ENCODE measurements at regions of chr2 and their contacts with region 1.

Region 1: GRCh38 chr2:201231781-201232466 is 28.4 kb upstream of the CASP8 start:
- DNase-seq: peak; percentile 96
- H3K4me3 Mint-ChIP-seq: peak overlapping the region; percentile 94
- H3K27ac Mint-ChIP-seq: peak overlapping the region; percentile 63
- H3K4me1 Mint-ChIP-seq: peaks cover 30% of the 10 kb centered on the region
- H3K27me3 Mint-ChIP-seq: no peaks in the 10 kb centered on the region
- CTCF ChIP-seq: peak; percentile 89

Region 2: DNA sequence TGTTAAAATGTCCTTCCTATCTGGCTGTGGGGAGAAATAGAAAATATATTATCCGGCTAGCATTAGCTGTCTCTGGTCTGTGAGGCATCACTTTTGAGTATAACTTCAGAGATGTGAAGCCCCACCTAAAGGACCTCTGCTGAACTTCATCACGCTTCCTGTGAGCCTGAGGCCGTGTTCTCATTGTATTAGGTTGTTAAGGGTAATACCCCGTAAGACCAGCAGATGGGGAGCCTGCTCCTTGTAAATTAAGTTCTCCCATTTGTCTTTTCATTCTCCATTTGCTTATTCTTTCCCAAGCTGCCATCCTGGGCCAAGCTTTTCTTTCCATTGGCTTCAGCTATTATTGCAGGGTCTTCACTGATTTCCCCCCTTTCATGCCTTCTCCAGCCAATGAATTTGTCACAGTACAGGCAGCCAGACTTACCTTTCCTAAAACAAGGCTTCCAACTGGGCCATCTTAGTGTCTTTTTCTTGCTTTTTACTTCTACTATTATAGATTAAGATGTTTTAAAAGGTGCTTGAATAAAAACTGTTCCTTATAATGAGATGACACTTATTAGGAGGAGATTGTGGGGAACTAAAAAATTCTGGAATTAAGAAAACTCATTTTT is 330.4 kb before region 1 on chr2:
- CTCF ChIA-PET with region 1: interaction called, 15 read pairs
- POLR2A ChIA-PET with region 1: interaction called, 13 read pairs
- intact Hi-C with region 1: loop called (anchors 1 kb)
- DNase-seq: peak; percentile 90
- H3K4me3 Mint-ChIP-seq: no peak overlapping the region
- H3K27ac Mint-ChIP-seq: no peak overlapping the region
- H3K4me1 Mint-ChIP-seq: no peaks in the 10 kb centered on the region
- H3K27me3 Mint-ChIP-seq: no peaks in the 10 kb centered on the region
- CTCF ChIP-seq: peak; percentile 88

Region 3: DNA sequence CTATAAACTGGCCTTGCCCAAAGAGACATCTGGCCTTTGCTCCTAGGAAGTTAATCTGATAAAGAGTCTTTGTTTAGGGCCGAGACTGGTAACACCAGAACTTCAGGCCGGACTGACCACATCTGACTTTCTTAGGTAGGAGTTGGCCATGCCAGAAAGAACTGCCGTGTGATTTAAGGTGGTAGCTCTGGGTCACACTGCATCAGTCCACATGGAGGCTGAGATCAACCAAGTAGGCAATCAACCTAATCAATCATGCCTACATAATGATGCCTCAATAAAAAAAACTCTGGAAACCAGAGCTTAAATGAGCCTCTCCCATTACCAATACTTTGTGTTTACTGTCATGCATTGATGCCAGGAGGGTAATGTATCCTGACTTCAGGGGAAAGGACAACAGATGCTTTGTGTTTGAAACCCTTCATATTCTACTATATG is 224.3 kb before region 1 on chr2:
- CTCF ChIA-PET with region 1: no interaction called
- POLR2A ChIA-PET with region 1: no interaction called
- intact Hi-C with region 1: no loop called
- DNase-seq: no peak
- H3K4me3 Mint-ChIP-seq: no peak overlapping the region
- H3K27ac Mint-ChIP-seq: no peak overlapping the region
- H3K4me1 Mint-ChIP-seq: no peaks in the 10 kb centered on the region
- H3K27me3 Mint-ChIP-seq: no peaks in the 10 kb centered on the region
- CTCF ChIP-seq: no peak

Region 4: DNA sequence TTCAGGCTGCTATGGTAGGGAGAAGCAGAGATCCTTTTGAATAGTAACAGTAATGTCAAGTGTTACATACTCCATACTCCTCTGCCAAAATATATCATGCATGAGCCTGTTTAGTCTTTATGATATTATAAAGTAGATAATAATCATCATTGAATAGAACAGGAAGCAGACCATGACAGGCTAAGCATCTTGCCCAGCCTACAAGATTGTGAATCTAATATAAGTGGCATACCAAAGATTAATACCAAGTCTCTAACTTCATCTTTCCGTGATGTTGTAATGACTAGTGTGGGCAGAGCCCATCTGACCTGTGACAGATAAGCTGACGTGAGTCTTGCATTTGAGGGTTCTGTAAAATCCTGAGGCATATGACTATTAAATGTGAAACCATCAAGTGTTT is 147.1 kb before region 1 on chr2:
- CTCF ChIA-PET with region 1: interaction called, 10 read pairs
- POLR2A ChIA-PET with region 1: no interaction called
- intact Hi-C with region 1: no loop called
- DNase-seq: no peak
- H3K4me3 Mint-ChIP-seq: no peak overlapping the region
- H3K27ac Mint-ChIP-seq: no peak overlapping the region
- H3K4me1 Mint-ChIP-seq: no peaks in the 10 kb centered on the region
- H3K27me3 Mint-ChIP-seq: no peaks in the 10 kb centered on the region
- CTCF ChIP-seq: no peak

Region 5: GRCh38 chr2:201182650-201183364 is 49.1 kb before region 1 on chr2 and contains the start of gene CASP10:
- CTCF ChIA-PET with region 1: interaction called, 24 read pairs
- POLR2A ChIA-PET with region 1: interaction called, 10 read pairs
- intact Hi-C with region 1: no loop called
- DNase-seq: peak; percentile 68
- H3K4me3 Mint-ChIP-seq: peak within 1 kb of the TSS; percentile 46
- H3K27ac Mint-ChIP-seq: no peak within 1 kb of the TSS
- H3K4me1 Mint-ChIP-seq: no peaks in the 10 kb centered on the region
- H3K27me3 Mint-ChIP-seq: no peaks in the 10 kb centered on the region
- CTCF ChIP-seq: no peak
- total RNA-seq, gene CASP10: 0.19 and 0.27 TPM in 2 replicates

Region 6: DNA sequence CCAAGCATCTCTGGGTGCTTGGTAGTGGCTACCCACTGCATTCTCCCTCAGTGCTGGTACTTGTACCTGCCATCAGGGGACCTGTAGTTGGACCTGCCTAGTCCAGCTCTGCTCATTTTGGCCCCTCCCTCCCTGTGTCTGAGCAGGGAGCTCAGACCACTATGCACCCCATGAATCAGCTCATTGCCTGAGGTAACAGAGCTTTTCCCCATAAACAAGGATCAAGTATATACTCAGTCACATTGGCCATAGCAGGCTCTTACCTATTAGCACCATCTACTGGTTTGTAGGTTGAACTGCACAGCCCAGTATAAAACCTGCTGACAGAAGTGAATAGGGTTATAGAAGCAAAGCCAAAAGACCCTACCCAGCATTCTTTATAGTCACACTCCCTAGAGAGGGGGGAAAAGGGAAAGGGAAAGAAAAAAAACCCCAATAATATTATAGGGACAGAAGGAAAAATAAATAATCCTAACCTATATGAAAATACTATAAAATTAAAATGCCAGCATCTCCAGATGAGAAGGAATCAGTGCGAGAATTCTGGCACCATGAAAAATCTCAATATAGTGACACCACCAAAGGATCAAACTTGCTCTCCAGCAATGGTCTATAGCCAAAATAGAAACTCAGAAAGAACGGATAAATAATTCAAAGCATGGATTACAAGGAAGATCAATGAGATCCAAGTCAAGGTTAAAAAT is 132.1 kb after region 1 on chr2:
- CTCF ChIA-PET with region 1: interaction called, 8 read pairs
- POLR2A ChIA-PET with region 1: interaction called, 7 read pairs
- intact Hi-C with region 1: loop called (anchors 1 kb)
- DNase-seq: peak; percentile 68
- H3K4me3 Mint-ChIP-seq: no peak overlapping the region
- H3K27ac Mint-ChIP-seq: peak overlapping the region; percentile 49
- H3K4me1 Mint-ChIP-seq: peaks cover 5% of the 10 kb centered on the region
- H3K27me3 Mint-ChIP-seq: no peaks in the 10 kb centered on the region
- CTCF ChIP-seq: peak; percentile 79

Region 7: GRCh38 chr2:201642579-201643215 is 410.8 kb after region 1 on chr2:
- CTCF ChIA-PET with region 1: interaction called, 4 read pairs
- POLR2A ChIA-PET with region 1: interaction called, 4 read pairs
- intact Hi-C with region 1: loop called (anchors 2 kb)
- DNase-seq: peak; percentile 85
- H3K4me3 Mint-ChIP-seq: peak overlapping the region; percentile 90
- H3K27ac Mint-ChIP-seq: peak overlapping the region; percentile 96
- H3K4me1 Mint-ChIP-seq: peaks cover 19% of the 10 kb centered on the region
- H3K27me3 Mint-ChIP-seq: no peaks in the 10 kb centered on the region
- CTCF ChIP-seq: no peak

Region 8: GRCh38 chr2:201795607-201796477 is 563.9 kb after region 1 on chr2:
- CTCF ChIA-PET with region 1: no interaction called
- POLR2A ChIA-PET with region 1: no interaction called
- intact Hi-C with region 1: loop called (anchors 10 kb)
- DNase-seq: peak; percentile 57
- H3K4me3 Mint-ChIP-seq: no peak overlapping the region
- H3K27ac Mint-ChIP-seq: no peak overlapping the region
- H3K4me1 Mint-ChIP-seq: peaks cover 12% of the 10 kb centered on the region
- H3K27me3 Mint-ChIP-seq: no peaks in the 10 kb centered on the region
- CTCF ChIP-seq: peak; percentile 74